T-cell (primary cell): ENCODE measurements at regions of chr5 and their contacts with region 1.

Region 1: GRCh38 chr5:72079296-72079695 is 28.0 kb upstream of the MAP1B start:
- DNase-seq: no peak
- ATAC-seq: no peak
- H3K4me3 ChIP-seq: no peak overlapping the region
- H3K4me3 Mint-ChIP-seq: no peak overlapping the region
- H3K27ac ChIP-seq: no peak overlapping the region
- H3K27ac Mint-ChIP-seq: no peak overlapping the region
- H3K4me1 ChIP-seq: no peaks in the 10 kb centered on the region
- H3K4me1 Mint-ChIP-seq: no peaks in the 10 kb centered on the region
- H3K27me3 ChIP-seq: peaks cover 0 to 13% of the 10 kb centered on the region in 2 experiments
- H3K27me3 Mint-ChIP-seq: peaks cover 26 to 43% of the 10 kb centered on the region in 2 donors

Region 2: DNA sequence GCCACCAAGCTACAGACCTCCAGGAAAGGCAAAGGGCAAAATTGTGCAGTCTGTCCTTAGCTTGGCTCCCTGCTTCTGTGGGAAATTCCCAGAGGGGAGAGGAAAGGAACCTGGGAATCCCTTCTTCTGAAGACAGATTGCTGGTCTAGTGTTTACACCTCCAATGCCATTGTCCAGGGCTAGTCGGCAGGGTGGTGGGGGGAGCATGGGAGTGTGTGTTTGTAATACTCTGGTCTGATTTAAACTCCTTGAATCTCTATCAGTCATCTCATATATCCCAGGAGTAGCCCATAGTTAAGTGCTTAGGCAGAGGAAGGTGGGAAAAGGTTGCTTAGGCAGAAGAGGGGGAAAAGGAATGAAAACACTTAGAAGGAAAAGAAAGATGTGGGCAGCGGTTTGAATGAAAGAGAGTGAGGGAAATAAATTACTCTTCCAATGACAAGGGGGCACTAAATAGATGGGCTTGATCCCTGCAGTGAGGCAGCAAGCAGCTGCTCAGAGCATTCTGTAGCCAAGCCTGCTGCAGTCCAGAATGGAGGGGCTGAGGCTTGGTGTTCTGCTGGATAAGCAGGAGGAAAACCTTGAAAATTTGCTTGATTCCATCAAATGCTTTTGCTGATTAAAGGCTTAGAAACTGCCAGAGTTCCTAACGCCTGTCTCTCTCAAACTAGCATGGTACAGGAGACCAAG is 58.8 kb before region 1 on chr5:
- CTCF ChIA-PET with region 1: no interaction called
- POLR2A ChIA-PET with region 1: no interaction called
- DNase-seq: no peak
- ATAC-seq: no peak
- H3K4me3 ChIP-seq: no peak overlapping the region
- H3K4me3 Mint-ChIP-seq: no peak overlapping the region
- H3K27ac ChIP-seq: no peak overlapping the region
- H3K27ac Mint-ChIP-seq: no peak overlapping the region
- H3K4me1 ChIP-seq: no peaks in the 10 kb centered on the region
- H3K4me1 Mint-ChIP-seq: peaks cover 0 to under 1% (median 0%) of the 10 kb centered on the region in 3 donors
- H3K27me3 ChIP-seq: peaks cover 0 to 18% of the 10 kb centered on the region in 2 experiments
- H3K27me3 Mint-ChIP-seq: peaks cover 21 to 34% of the 10 kb centered on the region in 2 donors

Region 3: DNA sequence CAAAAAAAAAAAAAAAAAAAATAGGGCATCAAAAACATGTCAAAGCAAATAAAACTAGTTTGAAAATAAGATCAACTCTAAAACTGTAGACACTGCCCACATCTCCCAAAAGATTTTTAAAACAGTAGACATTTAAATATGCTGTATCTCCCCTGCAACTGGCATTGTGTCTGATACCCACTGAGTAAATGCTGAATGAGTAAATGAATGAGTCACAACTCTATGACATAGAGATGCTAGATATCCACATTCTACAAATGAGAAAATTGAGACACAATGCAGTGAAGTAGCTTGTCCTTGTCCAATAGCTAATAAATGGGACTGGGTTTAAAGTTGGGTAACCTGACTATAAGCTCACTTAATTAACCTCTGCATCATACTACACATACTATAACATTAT is 13.9 kb after region 1 on chr5:
- CTCF ChIA-PET with region 1: no interaction called
- POLR2A ChIA-PET with region 1: no interaction called
- DNase-seq: no peak
- ATAC-seq: no peak
- H3K4me3 ChIP-seq: no peak overlapping the region
- H3K4me3 Mint-ChIP-seq: no peak overlapping the region
- H3K27ac ChIP-seq: no peak overlapping the region
- H3K27ac Mint-ChIP-seq: no peak overlapping the region
- H3K4me1 ChIP-seq: no peaks in the 10 kb centered on the region
- H3K4me1 Mint-ChIP-seq: no peaks in the 10 kb centered on the region
- H3K27me3 ChIP-seq: peaks cover 2 to 12% of the 10 kb centered on the region in 2 experiments
- H3K27me3 Mint-ChIP-seq: peaks cover 16 to 24% of the 10 kb centered on the region in 2 donors

Region 4: GRCh38 chr5:72557167-72558045 is 478.1 kb after region 1 on chr5:
- CTCF ChIA-PET with region 1: no interaction called
- POLR2A ChIA-PET with region 1: interaction called in 1 of 2 experiments, 10 read pairs
- DNase-seq: no peak
- ATAC-seq: no peak
- H3K4me3 ChIP-seq: peak overlapping the region in 1 of 2 donors; percentile 72
- H3K4me3 Mint-ChIP-seq: peak overlapping the region; percentile 58 to 80 (median 69)
- H3K27ac ChIP-seq: no peak overlapping the region
- H3K27ac Mint-ChIP-seq: peak overlapping the region in 1 of 2 donors; percentile 20
- H3K4me1 ChIP-seq: peaks cover 0 to 8% of the 10 kb centered on the region in 2 experiments
- H3K4me1 Mint-ChIP-seq: peaks cover 11 to 15% (median 13%) of the 10 kb centered on the region in 3 donors
- H3K27me3 ChIP-seq: peaks cover 0 to 27% of the 10 kb centered on the region in 2 experiments
- H3K27me3 Mint-ChIP-seq: peaks cover 46 to 56% of the 10 kb centered on the region in 2 donors